ENCODE measurements at regions of chr7 and their contacts with region 1.

Region 1: GRCh38 chr7:154729056-154729455 is 273.9 kb downstream of the PAXIP1 start:
- DNase-seq: no peak
- H3K4me3 ChIP-seq: no peak overlapping the region
- H3K27ac ChIP-seq: no peak overlapping the region
- H3K4me1 ChIP-seq: no peaks in the 10 kb centered on the region
- H3K27me3 ChIP-seq: no peaks in the 10 kb centered on the region
- CTCF ChIP-seq: no peak
- POLR2A ChIP-seq: no peak

Region 2: DNA sequence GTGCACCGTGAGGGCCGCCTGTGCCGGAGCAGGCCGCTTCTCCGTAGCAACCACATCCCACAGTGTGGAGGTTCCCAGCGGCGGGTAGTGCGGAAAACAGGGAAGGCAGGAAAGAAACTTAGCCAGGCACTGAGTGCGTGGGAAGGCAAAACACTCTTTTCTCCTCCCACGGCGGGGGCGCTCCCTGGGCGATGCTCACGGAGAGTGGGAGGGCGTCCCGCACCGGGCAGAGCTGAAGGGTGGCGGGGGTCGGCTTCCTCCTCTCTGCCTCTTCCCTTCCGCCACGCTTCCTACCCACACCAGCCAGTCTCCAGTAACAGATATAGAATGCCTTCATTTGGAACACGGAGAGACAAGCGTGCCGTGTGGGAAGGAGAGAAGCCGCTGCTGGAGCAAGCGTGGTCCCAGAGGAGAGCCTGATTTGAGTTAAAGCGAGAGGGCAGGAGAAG is 21.3 kb after region 1 on chr7:
- intact Hi-C with region 1: no loop called
- DNase-seq: no peak
- H3K4me3 ChIP-seq: no peak overlapping the region
- H3K27ac ChIP-seq: no peak overlapping the region
- H3K4me1 ChIP-seq: no peaks in the 10 kb centered on the region
- H3K27me3 ChIP-seq: no peaks in the 10 kb centered on the region
- CTCF ChIP-seq: no peak
- POLR2A ChIP-seq: no peak

Region 3: DNA sequence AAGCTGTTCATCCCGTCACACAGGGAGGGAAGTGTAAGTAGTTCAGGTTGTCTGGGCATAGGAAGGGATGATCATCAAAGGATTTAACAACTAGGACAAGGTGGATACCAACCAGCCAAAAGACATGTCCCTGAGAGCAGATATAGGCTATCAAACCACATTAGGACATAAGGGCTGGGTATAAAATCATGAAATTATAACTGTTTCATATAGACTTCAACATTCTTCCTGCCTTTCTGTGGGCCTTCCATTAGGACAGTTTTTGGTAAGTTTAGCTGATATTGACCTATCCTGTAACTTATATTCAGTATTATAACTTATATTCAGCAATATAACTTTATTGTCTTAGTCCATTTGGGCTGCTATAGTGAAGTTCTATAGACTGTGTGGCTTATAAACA is 83.0 kb after region 1 on chr7:
- intact Hi-C with region 1: loop called (anchors 2 kb)
- DNase-seq: no peak
- H3K4me3 ChIP-seq: no peak overlapping the region
- H3K27ac ChIP-seq: no peak overlapping the region
- H3K4me1 ChIP-seq: no peaks in the 10 kb centered on the region
- H3K27me3 ChIP-seq: no peaks in the 10 kb centered on the region
- CTCF ChIP-seq: no peak
- POLR2A ChIP-seq: no peak

Measured in breast epithelium (tissue), 4 donors.